Caco-2 (cell line): ENCODE measurements at regions of chr10 and their contacts with region 1.

Region 1: GRCh38 chr10:72173635-72174296 is 42.0 kb upstream of the ANAPC16 start:
- DNase-seq: no peak
- H3K4me3 ChIP-seq: no peak overlapping the region
- H3K4me3 Mint-ChIP-seq: no peak overlapping the region
- H3K27ac Mint-ChIP-seq: no peak overlapping the region
- H3K4me1 ChIP-seq: peaks cover 24% of the 10 kb centered on the region
- H3K4me1 Mint-ChIP-seq: peaks cover 19% of the 10 kb centered on the region
- H3K27me3 ChIP-seq: no peaks in the 10 kb centered on the region
- H3K27me3 Mint-ChIP-seq: no peaks in the 10 kb centered on the region
- CTCF ChIP-seq: no peak

Region 2: GRCh38 chr10:72097448-72098300 is 76.1 kb before region 1 on chr10:
- CTCF ChIA-PET with region 1: no interaction called
- POLR2A ChIA-PET with region 1: no interaction called
- intact Hi-C with region 1: loop called (anchors 2 kb)
- DNase-seq: peak; percentile 62 to 82
- H3K4me3 ChIP-seq: no peak overlapping the region
- H3K4me3 Mint-ChIP-seq: peak overlapping the region; percentile 14
- H3K27ac Mint-ChIP-seq: peak overlapping the region; percentile 65
- H3K4me1 ChIP-seq: peaks cover 49% of the 10 kb centered on the region
- H3K4me1 Mint-ChIP-seq: peaks cover 62% of the 10 kb centered on the region
- H3K27me3 ChIP-seq: no peaks in the 10 kb centered on the region
- H3K27me3 Mint-ChIP-seq: no peaks in the 10 kb centered on the region
- CTCF ChIP-seq: no peak

Region 3: GRCh38 chr10:72108830-72109631 is 64.7 kb before region 1 on chr10:
- CTCF ChIA-PET with region 1: no interaction called
- POLR2A ChIA-PET with region 1: no interaction called
- intact Hi-C with region 1: no loop called
- DNase-seq: no peak
- H3K4me3 ChIP-seq: no peak overlapping the region
- H3K4me3 Mint-ChIP-seq: no peak overlapping the region
- H3K27ac Mint-ChIP-seq: no peak overlapping the region
- H3K4me1 ChIP-seq: peaks cover 24% of the 10 kb centered on the region
- H3K4me1 Mint-ChIP-seq: peaks cover 40% of the 10 kb centered on the region
- H3K27me3 ChIP-seq: no peaks in the 10 kb centered on the region
- H3K27me3 Mint-ChIP-seq: no peaks in the 10 kb centered on the region
- CTCF ChIP-seq: no peak

Region 4: DNA sequence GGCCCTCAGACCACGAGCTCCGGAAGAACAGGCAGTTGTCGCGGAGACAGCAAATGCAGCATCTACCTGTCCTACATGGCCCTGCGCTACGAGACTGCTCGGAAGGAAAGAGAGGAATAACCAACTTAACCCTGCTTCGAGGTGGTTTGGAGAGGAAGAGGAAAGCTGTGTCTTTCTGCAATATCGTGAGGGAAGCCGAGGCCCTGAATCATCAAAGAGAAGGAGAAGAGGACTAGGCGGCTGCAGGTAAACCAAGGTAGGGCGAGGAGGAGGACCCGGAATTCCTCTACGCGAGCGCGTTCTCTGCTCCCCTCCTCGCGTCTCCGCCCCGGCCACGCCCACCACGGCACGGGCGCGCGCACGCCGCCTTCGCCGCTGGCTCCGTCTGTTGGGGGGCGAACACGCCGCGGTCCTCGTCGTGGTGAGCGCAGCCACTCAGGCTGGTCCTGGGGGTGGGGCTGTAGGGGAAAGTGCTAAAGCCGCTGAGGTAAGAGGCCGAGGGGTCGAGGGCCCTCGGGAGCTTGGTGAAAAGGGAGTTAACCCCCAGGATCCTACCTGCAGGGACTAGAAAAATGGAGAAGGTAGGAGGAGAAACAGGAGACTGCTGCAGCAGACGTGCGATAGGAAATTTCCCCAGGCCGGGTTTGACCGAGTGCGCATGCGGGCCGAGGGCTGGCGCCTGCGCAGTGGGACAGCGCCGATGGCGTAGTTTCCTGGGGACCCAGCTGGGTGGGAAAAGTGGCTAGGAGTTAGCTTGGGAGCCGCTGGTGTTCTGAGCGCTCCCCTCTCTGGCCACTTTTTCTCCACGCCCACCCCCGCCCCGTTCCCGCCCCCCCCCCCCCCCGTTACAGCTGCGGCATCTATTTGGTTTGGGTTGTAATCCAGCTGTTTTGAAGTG is 42.1 kb after region 1 on chr10 and contains the starts of genes ANAPC16 and ASCC1:
- CTCF ChIA-PET with region 1: no interaction called
- POLR2A ChIA-PET with region 1: interaction called, 8 read pairs
- intact Hi-C with region 1: loop called (anchors 1 kb)
- DNase-seq: peak; percentile 94 to 99
- H3K4me3 ChIP-seq: peak within 1 kb of the TSS; percentile 77
- H3K4me3 Mint-ChIP-seq: peak within 1 kb of the TSS; percentile 94
- H3K27ac Mint-ChIP-seq: peak within 1 kb of the TSS; percentile 92
- H3K4me1 ChIP-seq: peaks cover 13% of the 10 kb centered on the region; the same call in 1 of the 2 replicates
- H3K4me1 Mint-ChIP-seq: peaks cover 8% of the 10 kb centered on the region
- H3K27me3 ChIP-seq: no peaks in the 10 kb centered on the region
- H3K27me3 Mint-ChIP-seq: no peaks in the 10 kb centered on the region
- CTCF ChIP-seq: no peak
- total RNA-seq, gene ANAPC16: 134 and 144 TPM in 2 replicates
- total RNA-seq, gene ASCC1: 60.1 and 73.7 TPM in 2 replicates